ENCODE measurements at regions of chr6 and their contacts with region 1.

Region 1: GRCh38 chr6:41787219-41787917 is at the start of gene TOMM6:
- DNase-seq: peak; percentile 91
- ATAC-seq: peak; percentile 83
- H3K4me3 Mint-ChIP-seq: peak within 1 kb of the TSS; percentile 97
- H3K27ac Mint-ChIP-seq: peak within 1 kb of the TSS; percentile 97
- H3K4me1 Mint-ChIP-seq: peaks cover 28% of the 10 kb centered on the region
- H3K27me3 Mint-ChIP-seq: no peaks in the 10 kb centered on the region
- CTCF ChIP-seq: peak; percentile 66
- total RNA-seq, gene TOMM6: 219 and 252 TPM in 2 replicates

Region 2: GRCh38 chr6:41531591-41532582 is 255.5 kb before region 1 on chr6:
- CTCF ChIA-PET with region 1: no interaction called
- POLR2A ChIA-PET with region 1: no interaction called
- intact Hi-C with region 1: loop called (anchors 2 kb)
- DNase-seq: peak; percentile 64
- ATAC-seq: peak; percentile 81
- H3K4me3 Mint-ChIP-seq: peak overlapping the region; percentile 83
- H3K27ac Mint-ChIP-seq: peak overlapping the region; percentile 95
- H3K4me1 Mint-ChIP-seq: peaks cover 73% of the 10 kb centered on the region
- H3K27me3 Mint-ChIP-seq: no peaks in the 10 kb centered on the region
- CTCF ChIP-seq: no peak

Region 3: GRCh38 chr6:41602864-41603608 is 184.3 kb before region 1 on chr6:
- CTCF ChIA-PET with region 1: interaction called, 9 read pairs
- POLR2A ChIA-PET with region 1: interaction called, 3 read pairs
- intact Hi-C with region 1: loop called (anchors 2 kb)
- DNase-seq: peak; percentile 55
- ATAC-seq: peak; percentile 85
- H3K4me3 Mint-ChIP-seq: peak overlapping the region; percentile 46
- H3K27ac Mint-ChIP-seq: no peak overlapping the region
- H3K4me1 Mint-ChIP-seq: peaks cover 10% of the 10 kb centered on the region
- H3K27me3 Mint-ChIP-seq: no peaks in the 10 kb centered on the region
- CTCF ChIP-seq: no peak

Region 4: GRCh38 chr6:41936073-41936837 is 148.9 kb after region 1 on chr6:
- CTCF ChIA-PET with region 1: interaction called, 4 read pairs
- POLR2A ChIA-PET with region 1: interaction called, 7 read pairs
- intact Hi-C with region 1: loop called (anchors 1 kb)
- DNase-seq: peak; percentile 38
- ATAC-seq: peak; percentile 69
- H3K4me3 Mint-ChIP-seq: peak overlapping the region; percentile 53
- H3K27ac Mint-ChIP-seq: peak overlapping the region; percentile 65
- H3K4me1 Mint-ChIP-seq: peaks cover 78% of the 10 kb centered on the region
- H3K27me3 Mint-ChIP-seq: no peaks in the 10 kb centered on the region
- CTCF ChIP-seq: peak; percentile 63

Region 5: DNA sequence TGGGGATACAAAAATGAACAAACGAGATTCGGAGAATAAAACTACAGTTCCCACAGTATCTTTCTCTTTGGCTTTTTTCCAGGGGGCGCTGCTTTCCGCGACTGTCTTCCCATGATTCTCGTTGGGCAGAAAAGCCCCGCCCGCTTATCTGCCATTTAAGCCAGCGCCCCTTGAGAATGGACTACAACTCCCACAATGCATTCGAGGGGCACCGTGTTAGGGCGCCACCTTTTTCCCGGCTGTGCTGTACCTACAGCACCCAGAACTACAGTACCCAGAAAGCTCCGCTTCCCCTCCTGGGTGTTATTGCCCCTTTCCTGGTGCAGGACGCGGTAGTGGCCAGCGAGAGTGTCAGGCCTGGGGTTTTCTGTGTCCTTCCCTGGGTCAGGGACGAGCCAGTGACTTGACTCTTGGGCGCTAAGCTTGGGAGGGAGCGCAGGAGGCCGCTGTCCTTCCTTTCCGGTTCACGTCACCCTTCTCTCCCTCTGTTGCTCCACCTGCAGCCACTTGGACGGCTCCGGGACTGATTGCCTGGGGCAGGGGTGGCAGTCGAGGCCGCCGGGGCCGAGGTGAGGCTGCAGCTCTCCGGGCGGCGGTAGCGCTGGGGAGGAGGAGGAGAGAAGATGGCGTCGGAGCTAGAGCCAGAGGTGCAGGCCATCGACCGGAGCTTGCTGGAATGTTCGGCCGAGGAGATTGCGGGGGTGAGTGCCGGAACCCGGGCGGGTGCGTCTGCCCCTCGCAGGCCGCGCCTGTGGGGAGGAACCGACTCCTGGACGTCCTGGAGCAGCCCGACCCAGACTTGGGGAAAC is 776.5 kb after region 1 on chr6 and contains the start of gene UBR2:
- CTCF ChIA-PET with region 1: no interaction called
- POLR2A ChIA-PET with region 1: interaction called, 3 read pairs
- intact Hi-C with region 1: loop called (anchors 1 kb)
- DNase-seq: peak; percentile 73
- ATAC-seq: peak; percentile 96
- H3K4me3 Mint-ChIP-seq: peak within 1 kb of the TSS; percentile 92
- H3K27ac Mint-ChIP-seq: peak within 1 kb of the TSS; percentile 92
- H3K4me1 Mint-ChIP-seq: peaks cover 43% of the 10 kb centered on the region
- H3K27me3 Mint-ChIP-seq: no peaks in the 10 kb centered on the region
- CTCF ChIP-seq: no peak
- total RNA-seq, gene UBR2: 34.3 and 40.8 TPM in 2 replicates

Region 6: DNA sequence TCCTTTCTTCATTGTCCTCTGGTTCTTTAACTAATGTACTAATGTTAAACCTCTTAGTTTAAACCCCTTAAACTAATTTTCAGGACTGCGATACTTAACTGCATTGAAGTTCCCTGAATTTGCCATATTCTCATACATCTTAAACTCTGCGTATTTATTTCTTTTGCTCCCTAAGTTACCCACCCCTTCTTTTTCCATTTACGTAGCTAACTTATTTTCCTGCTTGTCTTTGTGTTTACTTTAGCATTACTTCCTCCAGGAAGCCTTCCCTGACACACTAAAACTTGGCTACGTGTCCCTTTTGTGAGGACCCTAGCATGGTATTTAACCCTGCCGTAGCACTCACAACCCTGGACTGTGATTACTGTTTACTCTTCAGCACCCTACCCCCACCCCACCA is 855.4 kb after region 1 on chr6:
- CTCF ChIA-PET with region 1: no interaction called
- POLR2A ChIA-PET with region 1: no interaction called
- intact Hi-C with region 1: no loop called
- DNase-seq: no peak
- ATAC-seq: no peak
- H3K4me3 Mint-ChIP-seq: no peak overlapping the region
- H3K27ac Mint-ChIP-seq: no peak overlapping the region
- H3K4me1 Mint-ChIP-seq: no peaks in the 10 kb centered on the region
- H3K27me3 Mint-ChIP-seq: no peaks in the 10 kb centered on the region
- CTCF ChIP-seq: no peak